Astrocyte of the cerebellum (primary cell): ENCODE measurements at regions of chr5 and their contacts with region 1.

Region 1: GRCh38 chr5:38316544-38317224 is 58.3 kb downstream of the EGFLAM start:
- DNase-seq: no peak
- H3K4me3 ChIP-seq: no peak overlapping the region
- CTCF ChIP-seq: no peak

Region 2: DNA sequence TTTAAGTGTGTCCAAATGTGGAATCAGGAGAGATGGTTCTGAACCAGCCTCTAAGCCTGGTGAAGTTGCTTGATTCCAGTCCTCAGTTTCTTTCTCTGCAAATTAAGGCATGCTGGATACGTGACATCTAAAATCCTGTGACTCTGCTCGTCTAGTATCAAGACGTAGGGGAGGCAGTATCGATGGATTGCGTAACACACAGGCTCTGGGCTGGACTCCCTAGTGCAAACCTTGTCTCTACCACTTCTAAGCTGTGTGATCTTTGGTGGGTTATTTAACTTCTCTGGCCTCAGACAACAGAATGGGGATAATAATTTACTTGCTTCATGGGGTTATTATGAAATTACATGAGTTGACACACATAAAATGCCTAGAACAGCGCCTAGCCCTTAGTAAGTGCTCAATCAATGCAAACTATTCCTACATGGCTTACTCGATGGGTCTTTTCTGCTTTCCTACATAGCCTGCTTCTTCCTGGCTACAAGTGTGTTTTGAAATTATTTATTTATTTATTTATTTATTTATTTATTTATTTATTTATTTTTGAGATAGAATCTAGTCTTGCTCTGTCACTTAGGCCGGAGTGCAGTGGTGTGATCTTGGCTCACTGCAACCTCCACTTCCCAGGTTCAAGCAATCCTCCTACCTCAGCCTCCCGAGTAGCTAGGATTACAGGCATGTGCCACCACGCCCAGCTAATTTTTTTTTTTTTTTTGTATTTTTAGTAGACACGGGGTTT is 43.8 kb after region 1 on chr5:
- in situ Hi-C with region 1: loop called (anchors 5 kb)
- DNase-seq: no peak
- H3K4me3 ChIP-seq: no peak overlapping the region
- CTCF ChIP-seq: no peak